Caco-2 (cell line): ENCODE measurements at regions of chr7 and their contacts with region 1.

Region 1: DNA sequence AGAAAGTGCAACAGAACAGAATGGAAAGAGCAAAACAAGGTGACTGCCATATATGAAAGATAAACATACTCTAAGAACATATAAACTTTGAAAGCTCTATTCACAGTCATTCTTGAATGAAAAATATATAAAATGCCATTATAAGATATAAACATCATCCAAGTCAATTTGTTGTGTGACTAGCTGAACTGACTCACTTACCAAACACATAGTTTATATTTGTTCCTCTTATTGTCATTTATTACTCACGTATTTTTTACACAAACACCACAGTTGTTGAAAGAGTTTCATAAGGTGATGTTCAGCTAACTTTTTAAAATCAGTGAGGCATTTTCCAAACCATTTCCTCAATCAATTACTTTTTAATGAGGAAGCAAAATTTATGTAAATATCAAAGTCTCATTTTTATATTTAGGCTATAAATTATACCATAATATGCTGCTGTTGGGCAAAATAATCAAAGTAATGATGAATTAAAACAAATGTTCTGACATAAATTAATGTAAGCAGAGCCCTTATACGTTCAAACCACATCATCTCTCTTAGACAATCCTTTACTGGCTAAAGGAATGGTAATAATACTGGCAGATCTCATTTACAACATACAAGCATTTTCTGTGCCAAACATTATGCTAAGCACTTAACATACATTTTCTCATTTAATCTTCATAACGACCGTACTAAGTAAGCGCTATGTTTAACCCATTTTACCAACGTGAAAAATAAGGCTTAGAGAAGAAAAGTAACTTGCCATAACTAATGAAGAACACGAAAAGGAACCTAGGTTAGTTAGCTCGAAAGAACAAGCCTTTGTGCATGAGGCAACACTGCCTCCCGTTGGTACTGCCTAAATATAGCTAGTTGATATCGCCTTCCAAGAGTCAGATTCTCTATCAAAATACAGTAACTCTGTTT is 7.3 kb downstream of the LRRN3 start:
- DNase-seq: peak in 1 of 2 experiments; percentile 32
- H3K4me3 ChIP-seq: no peak overlapping the region
- H3K4me3 Mint-ChIP-seq: no peak overlapping the region
- H3K27ac Mint-ChIP-seq: no peak overlapping the region
- H3K4me1 ChIP-seq: no peaks in the 10 kb centered on the region
- H3K4me1 Mint-ChIP-seq: no peaks in the 10 kb centered on the region
- H3K27me3 ChIP-seq: no peaks in the 10 kb centered on the region
- H3K27me3 Mint-ChIP-seq: no peaks in the 10 kb centered on the region
- CTCF ChIP-seq: peak; percentile 38 to 54

Region 2: DNA sequence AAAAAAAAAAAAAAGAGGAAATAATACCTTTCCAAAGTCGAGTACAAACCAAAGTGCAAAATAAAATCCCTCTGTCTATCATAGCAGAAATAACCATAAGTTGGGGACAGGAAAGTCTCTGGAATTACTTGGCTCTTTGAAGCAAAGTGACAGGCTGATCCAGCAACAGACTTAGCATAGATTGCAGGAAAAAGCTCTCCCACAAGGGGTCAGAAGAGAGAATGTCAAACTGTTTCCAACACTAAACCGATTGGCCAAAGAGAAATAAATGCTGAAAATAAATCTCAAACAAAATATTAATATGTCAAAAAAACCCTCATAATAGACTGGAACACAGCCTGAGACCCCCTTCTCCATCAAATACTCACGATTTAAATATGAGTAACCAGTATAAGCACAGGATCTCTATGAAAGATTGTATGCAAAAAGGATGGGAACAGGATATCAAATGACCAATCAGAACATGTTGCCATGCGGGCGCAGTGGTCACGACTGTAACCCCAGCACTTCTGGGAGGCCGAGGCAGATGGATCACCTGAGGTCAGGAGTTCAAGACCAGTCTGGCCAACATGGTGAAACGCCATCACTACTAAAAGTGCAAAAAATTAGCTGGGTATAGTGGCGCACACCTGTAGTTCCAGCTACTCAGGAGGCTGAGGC is 1008.0 kb before region 1 on chr7:
- CTCF ChIA-PET with region 1: no interaction called
- POLR2A ChIA-PET with region 1: no interaction called
- intact Hi-C with region 1: loop called (anchors 1 kb)
- DNase-seq: peak in 1 of 2 experiments; percentile 52
- H3K4me3 ChIP-seq: no peak overlapping the region
- H3K4me3 Mint-ChIP-seq: no peak overlapping the region
- H3K27ac Mint-ChIP-seq: no peak overlapping the region
- H3K4me1 ChIP-seq: no peaks in the 10 kb centered on the region
- H3K4me1 Mint-ChIP-seq: no peaks in the 10 kb centered on the region
- H3K27me3 ChIP-seq: no peaks in the 10 kb centered on the region
- H3K27me3 Mint-ChIP-seq: peaks cover 2% of the 10 kb centered on the region
- CTCF ChIP-seq: peak; percentile 65 to 66

Region 3: DNA sequence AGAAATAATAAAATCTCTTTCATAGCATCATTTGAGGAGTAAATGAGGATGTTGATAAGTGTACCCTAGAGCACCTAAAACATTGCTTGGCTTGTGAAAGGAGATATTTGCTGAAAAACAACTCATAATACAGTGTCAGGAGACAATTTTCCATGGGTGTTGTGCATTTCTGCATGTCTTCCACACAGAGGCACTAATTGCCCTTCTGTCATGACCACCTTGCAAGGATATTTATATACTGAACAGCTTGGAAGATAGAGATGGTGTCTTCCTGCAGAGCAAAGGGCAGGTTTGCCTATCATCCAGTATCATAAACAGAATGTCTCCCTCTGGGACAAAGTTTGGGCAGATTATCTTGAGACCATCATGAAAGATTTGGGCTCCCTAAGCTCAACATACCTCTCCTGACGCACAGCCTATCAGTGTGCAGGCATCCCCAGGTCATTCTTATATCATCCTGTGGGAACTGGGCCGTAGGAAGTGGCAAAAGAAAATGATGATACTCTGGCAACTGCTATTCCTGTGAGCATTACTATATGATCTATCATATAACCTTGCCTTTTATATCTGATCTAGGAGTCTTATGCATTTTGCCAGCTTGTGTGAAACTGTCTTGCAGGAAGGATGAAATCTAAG is 502.5 kb before region 1 on chr7:
- CTCF ChIA-PET with region 1: no interaction called
- POLR2A ChIA-PET with region 1: no interaction called
- intact Hi-C with region 1: loop called (anchors 1 kb)
- DNase-seq: no peak
- H3K4me3 ChIP-seq: no peak overlapping the region
- H3K4me3 Mint-ChIP-seq: no peak overlapping the region
- H3K27ac Mint-ChIP-seq: no peak overlapping the region
- H3K4me1 ChIP-seq: no peaks in the 10 kb centered on the region
- H3K4me1 Mint-ChIP-seq: no peaks in the 10 kb centered on the region
- H3K27me3 ChIP-seq: no peaks in the 10 kb centered on the region
- H3K27me3 Mint-ChIP-seq: no peaks in the 10 kb centered on the region
- CTCF ChIP-seq: peak in 1 of 2 experiments; percentile 28